Left cardiac atrium (tissue), 4 donors: ENCODE measurements at regions of chr14 and their contacts with region 1.

Region 1: DNA sequence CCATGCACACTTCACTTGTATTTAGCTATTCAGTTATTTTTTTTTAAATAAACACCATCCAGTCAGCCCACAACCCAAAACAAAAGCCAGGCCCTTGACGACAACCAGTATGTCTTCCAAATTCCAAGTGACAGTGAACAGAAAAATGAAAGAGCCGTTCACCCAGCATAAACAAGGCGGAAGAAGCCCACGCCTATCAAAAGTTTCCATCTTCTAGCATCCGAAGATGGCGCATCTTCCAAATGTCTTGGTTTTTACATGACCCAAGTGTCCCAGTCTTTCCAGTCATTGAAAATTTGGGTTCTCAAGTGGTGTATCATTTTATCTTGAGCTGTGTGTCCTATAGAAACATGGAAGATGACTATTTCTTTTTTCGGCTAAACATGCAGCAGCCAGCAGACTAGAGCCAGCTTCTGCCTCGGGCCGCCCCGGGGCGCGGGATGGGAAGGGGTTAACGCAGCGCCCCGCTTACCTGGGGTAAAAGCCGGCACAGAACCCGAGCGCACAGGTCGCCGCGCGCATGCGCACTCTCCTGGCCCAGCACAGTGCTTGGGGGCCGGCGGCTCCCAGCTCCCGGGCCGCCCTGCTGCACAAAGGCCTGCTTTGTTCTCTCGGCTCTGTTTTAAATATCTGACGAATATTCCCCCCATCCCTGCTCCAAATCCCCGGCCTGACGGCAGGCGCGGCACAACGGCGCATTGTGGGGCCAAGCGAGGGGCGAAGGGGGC is 164.8 kb downstream of the ZFP36L1 start:
- DNase-seq: peak; percentile 77
- ATAC-seq: peak; percentile 32 to 52

Region 2: DNA sequence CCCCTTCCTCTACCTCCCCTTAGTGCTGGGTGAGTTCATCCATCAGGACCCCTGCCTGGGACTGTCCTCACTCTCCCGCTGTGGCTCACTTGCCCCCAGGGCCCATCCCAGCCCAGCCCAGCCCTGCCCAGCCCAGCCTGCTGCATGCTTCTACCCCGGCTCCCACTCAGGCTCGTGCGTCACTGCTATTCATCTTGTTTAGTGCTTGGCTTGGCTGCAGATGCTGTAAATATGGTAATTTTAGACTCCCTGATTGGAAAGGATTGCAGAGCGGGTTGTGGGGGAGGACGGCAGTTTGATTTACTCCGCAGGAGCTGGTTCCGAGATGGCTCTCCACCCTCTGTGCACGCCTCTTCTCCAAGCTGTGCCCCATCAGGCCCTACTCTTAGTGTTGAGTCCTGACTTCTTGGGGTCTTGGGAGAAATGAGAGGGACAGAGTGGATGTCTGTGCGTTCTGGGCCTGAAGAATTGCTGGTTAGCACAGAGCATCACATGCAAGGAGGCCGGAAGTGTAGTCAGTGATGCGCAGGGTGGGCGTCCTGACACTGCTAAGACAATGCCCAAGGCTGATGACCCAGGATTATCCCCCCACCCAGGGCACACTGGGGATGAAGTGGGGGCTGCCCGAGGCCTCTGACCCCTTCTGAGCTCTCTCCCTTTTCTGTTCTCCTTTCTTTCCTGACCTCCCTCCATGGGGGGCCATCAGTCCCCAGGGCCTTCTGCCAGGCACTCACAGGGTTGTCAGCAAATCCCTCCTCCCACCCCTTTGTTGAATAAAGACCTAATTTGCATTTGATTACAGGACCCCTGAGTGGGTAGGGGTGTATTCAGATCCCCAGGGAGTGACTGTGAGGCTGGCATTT is 79.6 kb before region 1 on chr14:
- intact Hi-C with region 1: loop called in 1 of 2 experiments (anchors 5 kb)
- DNase-seq: peak; percentile 93
- ATAC-seq: peak; percentile 89 to 90

Region 3: GRCh38 chr14:68643713-68644500 is 15.9 kb after region 1 on chr14:
- intact Hi-C with region 1: loop called in 1 of 2 experiments (anchors 2 kb)
- DNase-seq: no peak
- ATAC-seq: peak in 1 of 2 donors; percentile 30